ENCODE measurements at regions of chr2 and their contacts with region 1.

Region 1: DNA sequence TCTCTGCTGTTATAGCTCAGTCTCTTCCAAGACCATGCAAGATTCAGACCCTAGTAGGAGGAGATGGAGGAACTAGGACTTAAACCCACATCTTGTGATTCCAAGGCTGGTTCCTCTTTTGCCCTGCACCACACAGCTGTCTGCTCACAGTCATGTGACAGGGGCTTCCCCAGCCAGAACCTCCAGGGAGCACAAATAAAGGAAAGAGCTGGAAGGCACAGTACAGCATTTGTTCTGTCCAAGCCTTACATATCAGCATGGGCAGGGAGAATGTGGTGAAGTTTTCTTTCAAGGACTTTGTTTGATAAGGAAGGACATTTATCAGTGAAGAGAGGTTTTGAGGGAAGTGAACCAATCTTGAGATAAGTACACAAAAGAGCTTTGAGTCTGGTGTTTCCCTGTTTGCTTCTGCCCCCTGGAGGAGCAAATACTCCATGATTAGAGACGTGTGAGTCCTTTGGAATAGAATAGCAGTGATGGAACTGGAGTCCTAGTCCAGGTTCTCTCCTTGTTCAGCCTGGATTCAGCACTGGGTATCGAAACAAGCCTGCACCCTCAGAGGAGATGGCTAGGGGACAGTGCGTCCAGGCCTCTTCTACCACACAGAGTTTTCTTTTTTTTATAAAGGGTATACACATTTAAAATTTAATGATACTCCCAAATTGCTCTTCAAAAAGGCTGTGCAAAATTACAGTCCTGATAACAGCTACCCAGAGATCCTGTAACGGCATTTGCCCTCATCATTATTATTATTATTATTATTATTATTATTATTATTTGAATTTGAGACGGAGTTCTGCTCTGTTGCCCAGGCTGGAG is 24.6 kb upstream of the CASP10 start:
- DNase-seq: peak; percentile 75 to 84
- ATAC-seq: peak; percentile 94 to 96
- H3K4me3 ChIP-seq: no peak overlapping the region
- H3K27ac ChIP-seq: peak overlapping the region; percentile 77 to 85
- H3K4me1 ChIP-seq: peaks cover 16% of the 10 kb centered on the region
- CTCF ChIP-seq: peak; percentile 85
- EP300 ChIP-seq: no peak
- POLR2A ChIP-seq: no peak
- RAD21 ChIP-seq: peak; percentile 94

Region 2: DNA sequence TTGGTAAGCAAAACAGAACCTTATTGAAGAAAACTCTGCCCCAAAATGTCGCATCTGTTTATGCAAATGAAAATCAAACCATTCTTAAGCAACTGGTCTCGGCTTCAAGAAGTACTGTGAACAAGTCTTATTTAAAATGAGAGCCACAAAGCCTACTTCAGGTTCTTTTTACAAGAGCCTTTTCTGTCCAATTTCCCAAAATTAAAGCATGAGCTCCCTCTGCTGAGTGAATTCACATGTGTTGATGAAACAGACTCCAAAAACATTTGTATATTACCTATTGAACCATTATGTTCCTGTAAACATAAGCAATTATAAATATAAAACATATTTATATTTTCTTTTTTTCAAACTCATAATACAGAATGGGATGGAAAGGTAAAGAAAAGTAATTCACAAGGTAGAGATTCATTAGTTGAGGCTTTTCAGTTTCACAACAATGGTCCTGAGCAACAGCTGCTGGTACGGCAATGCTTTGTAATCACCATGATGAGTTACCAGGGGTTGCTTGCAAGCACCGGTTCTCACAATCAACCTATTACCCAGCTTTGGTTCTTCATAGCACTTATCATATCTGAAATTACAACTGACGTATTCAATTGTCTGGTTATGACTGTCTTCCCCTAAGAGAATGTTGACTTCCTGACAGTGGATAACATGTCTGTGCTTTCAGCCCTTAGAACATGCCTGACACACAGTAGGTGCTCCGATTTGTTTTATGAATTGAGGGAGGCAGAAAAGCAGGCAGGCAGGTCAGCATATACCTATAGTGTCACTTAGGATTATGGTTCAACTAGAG is 455.0 kb before region 1 on chr2:
- CTCF ChIA-PET with region 1: no interaction called
- POLR2A ChIA-PET with region 1: no interaction called
- DNase-seq: peak; percentile 15 to 74
- ATAC-seq: peak; percentile 40 to 84; a peak in 4 of 6 replicates
- H3K4me3 ChIP-seq: no peak overlapping the region
- H3K27ac ChIP-seq: peak overlapping the region; percentile 17 to 57; a peak in 4 of 6 replicates
- H3K4me1 ChIP-seq: peaks cover 6% of the 10 kb centered on the region
- CTCF ChIP-seq: peak; percentile 92
- EP300 ChIP-seq: no peak
- POLR2A ChIP-seq: no peak
- RAD21 ChIP-seq: peak; percentile 91 to 96

Region 3: GRCh38 chr2:200963124-200963917 is 195.0 kb before region 1 on chr2 and contains the start of gene ORC2:
- CTCF ChIA-PET with region 1: interaction called, 10 read pairs
- POLR2A ChIA-PET with region 1: interaction called, 3 read pairs
- DNase-seq: peak; percentile 90 to 96
- ATAC-seq: peak; percentile 97 to 98
- H3K4me3 ChIP-seq: peak within 1 kb of the TSS; percentile 73
- H3K27ac ChIP-seq: peak within 1 kb of the TSS; percentile 94 to 96
- H3K4me1 ChIP-seq: peaks cover 41% of the 10 kb centered on the region
- CTCF ChIP-seq: peak; percentile 62
- EP300 ChIP-seq: peak in 1 of 2 experiments; percentile 10; a peak in 1 of 5 replicates
- POLR2A ChIP-seq: peak; percentile 47
- RAD21 ChIP-seq: peak; percentile 41 to 53; a peak in 4 of 5 replicates
- polyA plus RNA-seq, gene ORC2: 20.9 and 23.3 TPM in 2 replicates

Region 4: DNA sequence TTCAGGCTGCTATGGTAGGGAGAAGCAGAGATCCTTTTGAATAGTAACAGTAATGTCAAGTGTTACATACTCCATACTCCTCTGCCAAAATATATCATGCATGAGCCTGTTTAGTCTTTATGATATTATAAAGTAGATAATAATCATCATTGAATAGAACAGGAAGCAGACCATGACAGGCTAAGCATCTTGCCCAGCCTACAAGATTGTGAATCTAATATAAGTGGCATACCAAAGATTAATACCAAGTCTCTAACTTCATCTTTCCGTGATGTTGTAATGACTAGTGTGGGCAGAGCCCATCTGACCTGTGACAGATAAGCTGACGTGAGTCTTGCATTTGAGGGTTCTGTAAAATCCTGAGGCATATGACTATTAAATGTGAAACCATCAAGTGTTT is 73.5 kb before region 1 on chr2:
- CTCF ChIA-PET with region 1: interaction called, 10 read pairs
- POLR2A ChIA-PET with region 1: no interaction called
- DNase-seq: no peak
- ATAC-seq: no peak
- H3K4me3 ChIP-seq: no peak overlapping the region
- H3K27ac ChIP-seq: no peak overlapping the region
- H3K4me1 ChIP-seq: no peaks in the 10 kb centered on the region
- CTCF ChIP-seq: no peak
- EP300 ChIP-seq: no peak
- POLR2A ChIP-seq: no peak
- RAD21 ChIP-seq: no peak

Region 5: DNA sequence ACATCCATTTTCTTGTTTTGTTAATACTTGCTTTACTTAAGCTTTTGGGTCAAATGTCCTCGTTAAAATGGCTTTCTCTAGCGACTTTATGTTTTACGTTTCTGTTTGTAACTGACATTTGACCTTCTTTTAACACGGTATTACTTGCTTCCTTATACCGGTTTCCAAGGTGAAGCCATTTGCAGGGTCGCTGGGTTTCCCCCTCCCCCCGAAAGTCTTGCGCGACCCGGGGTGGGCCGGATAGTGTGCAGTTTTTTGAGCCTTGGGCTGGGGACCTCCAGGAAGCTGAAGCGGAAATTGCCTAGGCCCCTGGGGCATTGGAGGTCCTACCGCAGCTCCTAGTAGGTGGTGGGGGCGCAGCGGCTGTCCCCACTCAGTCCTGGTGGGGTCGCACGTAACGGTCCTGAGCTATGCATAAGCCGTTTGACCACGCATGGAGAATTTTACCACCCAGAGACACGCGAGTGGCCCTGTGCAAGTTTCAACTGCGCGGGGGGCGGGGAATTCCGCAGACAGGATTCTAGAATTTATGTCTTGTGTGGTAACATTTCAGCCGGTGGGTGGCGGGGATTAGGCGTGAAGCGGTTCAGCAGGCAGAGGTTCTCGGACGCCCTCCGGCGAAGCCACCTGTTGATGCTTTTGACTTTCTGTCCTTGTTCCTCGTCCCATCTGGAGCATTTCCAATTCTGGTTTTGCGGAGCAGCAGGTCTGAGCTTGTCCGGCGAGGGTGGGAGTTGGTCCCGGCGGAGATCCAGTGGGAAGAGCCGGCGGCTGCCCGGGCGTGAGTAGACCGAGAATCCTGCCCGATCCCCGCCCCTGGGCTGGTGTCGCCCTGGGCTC is 40.0 kb before region 1 on chr2:
- CTCF ChIA-PET with region 1: interaction called, 108 read pairs
- POLR2A ChIA-PET with region 1: interaction called, 23 read pairs
- DNase-seq: peak; percentile 66 to 91
- ATAC-seq: peak; percentile 67 to 69
- H3K4me3 ChIP-seq: peak overlapping the region; percentile 69
- H3K27ac ChIP-seq: peak overlapping the region; percentile 90 to 99
- H3K4me1 ChIP-seq: peaks cover 56% of the 10 kb centered on the region
- CTCF ChIP-seq: peak; percentile 62
- EP300 ChIP-seq: peak in 1 of 2 experiments; percentile 19; a peak in 1 of 5 replicates
- POLR2A ChIP-seq: peak; percentile 33; the same call in 1 of the 2 replicates
- RAD21 ChIP-seq: peak; percentile 61 to 77

Region 6: GRCh38 chr2:201144101-201145051 is 13.9 kb before region 1 on chr2:
- CTCF ChIA-PET with region 1: interaction called, 28 read pairs
- POLR2A ChIA-PET with region 1: interaction called, 3 read pairs
- DNase-seq: no peak
- ATAC-seq: no peak; a peak in 1 of 6 replicates
- H3K4me3 ChIP-seq: no peak overlapping the region
- H3K27ac ChIP-seq: peak overlapping the region in 1 of 2 experiments; percentile 27; a peak in 2 of 6 replicates
- H3K4me1 ChIP-seq: peaks cover 29% of the 10 kb centered on the region
- CTCF ChIP-seq: no peak
- EP300 ChIP-seq: no peak
- POLR2A ChIP-seq: no peak
- RAD21 ChIP-seq: no peak